CD8-positive, alpha-beta memory T cell (primary cell): ENCODE measurements at regions of chr7 and their contacts with region 1.

Region 1: GRCh38 chr7:105519353-105519752 is 2.7 kb downstream of the PUS7 start:
- DNase-seq: no peak
- H3K4me3 ChIP-seq: no peak overlapping the region
- H3K4me3 Mint-ChIP-seq: peak overlapping the region in 4 of 7 donors; percentile 15 to 82 (median 34)
- H3K27ac ChIP-seq: no peak overlapping the region
- H3K27ac Mint-ChIP-seq: no peak overlapping the region
- H3K4me1 ChIP-seq: peaks cover 6% of the 10 kb centered on the region
- H3K4me1 Mint-ChIP-seq: peaks cover 11 to 18% (median 16%) of the 10 kb centered on the region in 3 donors
- H3K27me3 ChIP-seq: no peaks in the 10 kb centered on the region
- H3K27me3 Mint-ChIP-seq: no peaks in the 10 kb centered on the region

Region 2: GRCh38 chr7:105365541-105366534 is 153.5 kb before region 1 on chr7:
- CTCF ChIA-PET with region 1: no interaction called
- POLR2A ChIA-PET with region 1: no interaction called
- DNase-seq: no peak
- H3K4me3 ChIP-seq: no peak overlapping the region
- H3K4me3 Mint-ChIP-seq: no peak overlapping the region
- H3K27ac ChIP-seq: no peak overlapping the region
- H3K27ac Mint-ChIP-seq: no peak overlapping the region
- H3K4me1 ChIP-seq: peaks cover 5% of the 10 kb centered on the region
- H3K4me1 Mint-ChIP-seq: peaks cover 32 to 73% (median 56%) of the 10 kb centered on the region in 3 donors
- H3K27me3 ChIP-seq: no peaks in the 10 kb centered on the region
- H3K27me3 Mint-ChIP-seq: no peaks in the 10 kb centered on the region

Region 3: GRCh38 chr7:105531792-105532671 is 12.7 kb after region 1 on chr7 and contains the start of gene RINT1:
- CTCF ChIA-PET with region 1: interaction called, 16 read pairs
- POLR2A ChIA-PET with region 1: interaction called, 4 read pairs
- DNase-seq: peak; percentile 76 to 89 (median 85)
- H3K4me3 ChIP-seq: peak within 1 kb of the TSS; percentile 93
- H3K4me3 Mint-ChIP-seq: peak within 1 kb of the TSS; percentile 89 to 97 (median 93)
- H3K27ac ChIP-seq: peak within 1 kb of the TSS; percentile 93
- H3K27ac Mint-ChIP-seq: peak within 1 kb of the TSS; percentile 75 to 98 (median 96)
- H3K4me1 ChIP-seq: peaks cover 18% of the 10 kb centered on the region
- H3K4me1 Mint-ChIP-seq: peaks cover 30 to 58% (median 46%) of the 10 kb centered on the region in 3 donors
- H3K27me3 ChIP-seq: no peaks in the 10 kb centered on the region
- H3K27me3 Mint-ChIP-seq: no peaks in the 10 kb centered on the region
- total RNA-seq, gene RINT1: 28.4 to 29.6 TPM